ENCODE measurements at regions of chrX and their contacts with region 1.

Region 1: DNA sequence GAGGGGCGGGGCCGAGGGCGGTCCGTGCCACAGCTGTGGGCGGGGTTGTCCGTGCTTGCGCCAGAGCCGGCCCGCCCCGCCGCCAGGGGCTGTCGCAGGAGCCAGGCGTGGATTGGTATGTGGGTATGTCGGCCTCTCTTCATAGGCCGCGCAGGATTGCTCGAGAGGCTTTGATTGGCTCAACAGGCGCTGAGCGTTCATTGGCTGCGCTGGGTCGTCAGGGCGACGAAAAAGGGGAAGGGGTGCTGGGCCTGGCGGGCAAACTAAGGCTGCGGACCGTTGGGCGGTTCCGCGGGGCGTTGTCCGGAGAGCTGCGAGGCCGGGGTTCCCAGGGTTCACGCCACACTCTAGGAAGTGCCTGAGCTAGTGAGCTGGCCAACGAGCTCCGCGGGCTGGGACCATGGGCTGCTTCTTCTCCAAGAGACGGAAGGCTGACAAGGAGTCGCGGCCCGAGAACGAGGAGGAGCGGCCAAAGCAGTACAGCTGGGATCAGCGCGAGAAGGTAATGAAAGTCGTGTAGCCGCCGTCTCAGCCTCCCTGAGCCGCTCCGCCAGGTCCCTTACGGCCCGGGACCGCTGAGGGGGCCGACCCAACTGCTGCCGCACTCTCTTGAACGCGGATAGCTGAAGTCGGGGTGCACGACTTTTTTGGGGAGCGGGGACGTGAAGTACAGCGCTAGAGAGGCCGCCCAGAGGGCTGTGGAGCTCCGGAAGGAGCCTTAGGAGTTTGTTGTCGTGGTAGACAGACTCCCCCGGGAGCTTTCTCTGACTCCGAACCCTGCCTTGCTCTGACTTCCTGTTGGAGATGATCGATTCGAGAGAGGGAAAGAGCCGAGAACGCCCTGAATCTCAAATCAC is at the start of gene RP2:
- DNase-seq: peak; percentile 65 to 84 (median 81)
- ATAC-seq: peak; percentile 98
- H3K4me3 ChIP-seq: peak within 1 kb of the TSS; percentile 91
- H3K4me3 Mint-ChIP-seq: peak within 1 kb of the TSS; percentile 93 to 99 (median 97)
- H3K27ac ChIP-seq: peak within 1 kb of the TSS; percentile 83
- H3K27ac Mint-ChIP-seq: peak within 1 kb of the TSS; percentile 80 to 98 (median 93)
- H3K4me1 ChIP-seq: no peaks in the 10 kb centered on the region
- H3K4me1 Mint-ChIP-seq: peaks cover 0 to 29% (median 12%) of the 10 kb centered on the region in 7 donors
- H3K27me3 ChIP-seq: no peaks in the 10 kb centered on the region
- H3K27me3 Mint-ChIP-seq: peaks cover 0 to 3% (median 0%) of the 10 kb centered on the region in 5 donors
- total RNA-seq, gene RP2: 4.9 to 14.5 (median 6.3) TPM

Region 2: GRCh38 chrX:46704767-46705386 is 132.1 kb before region 1 on chrX:
- CTCF ChIA-PET with region 1: no interaction called
- POLR2A ChIA-PET with region 1: no interaction called
- intact Hi-C with region 1: no loop called
- DNase-seq: peak in 1 of 9 donors; percentile 42
- ATAC-seq: peak; percentile 32
- H3K4me3 ChIP-seq: no peak overlapping the region
- H3K4me3 Mint-ChIP-seq: peak overlapping the region in 1 of 10 donors; percentile 76
- H3K27ac ChIP-seq: no peak overlapping the region
- H3K27ac Mint-ChIP-seq: peak overlapping the region in 5 of 9 donors; percentile 9 to 92 (median 35)
- H3K4me1 ChIP-seq: no peaks in the 10 kb centered on the region
- H3K4me1 Mint-ChIP-seq: peaks cover 6 to 45% (median 7%) of the 10 kb centered on the region in 7 donors
- H3K27me3 ChIP-seq: no peaks in the 10 kb centered on the region
- H3K27me3 Mint-ChIP-seq: no peaks in the 10 kb centered on the region

Region 3: GRCh38 chrX:46912098-46912602 is 75.2 kb after region 1 on chrX and contains the start of gene JADE3:
- CTCF ChIA-PET with region 1: no interaction called
- POLR2A ChIA-PET with region 1: no interaction called
- intact Hi-C with region 1: loop called in 1 of 2 experiments (anchors 2 kb)
- DNase-seq: peak in 3 of 9 donors; percentile 3 to 45 (median 8)
- ATAC-seq: peak; percentile 75
- H3K4me3 ChIP-seq: peak within 1 kb of the TSS; percentile 39
- H3K4me3 Mint-ChIP-seq: peak within 1 kb of the TSS; percentile 67 to 90 (median 82)
- H3K27ac ChIP-seq: no peak within 1 kb of the TSS
- H3K27ac Mint-ChIP-seq: peak within 1 kb of the TSS in 1 of 9 donors; percentile 32
- H3K4me1 ChIP-seq: peaks cover 0 to 7% of the 10 kb centered on the region in 2 donors
- H3K4me1 Mint-ChIP-seq: peaks cover 0 to 14% (median 7%) of the 10 kb centered on the region in 7 donors
- H3K27me3 ChIP-seq: peaks cover 0 to 6% of the 10 kb centered on the region in 2 donors
- H3K27me3 Mint-ChIP-seq: peaks cover 15 to 66% (median 27%) of the 10 kb centered on the region in 5 donors
- total RNA-seq, gene JADE3: 0.11 to 1.3 (median 0.22) TPM

Region 4: DNA sequence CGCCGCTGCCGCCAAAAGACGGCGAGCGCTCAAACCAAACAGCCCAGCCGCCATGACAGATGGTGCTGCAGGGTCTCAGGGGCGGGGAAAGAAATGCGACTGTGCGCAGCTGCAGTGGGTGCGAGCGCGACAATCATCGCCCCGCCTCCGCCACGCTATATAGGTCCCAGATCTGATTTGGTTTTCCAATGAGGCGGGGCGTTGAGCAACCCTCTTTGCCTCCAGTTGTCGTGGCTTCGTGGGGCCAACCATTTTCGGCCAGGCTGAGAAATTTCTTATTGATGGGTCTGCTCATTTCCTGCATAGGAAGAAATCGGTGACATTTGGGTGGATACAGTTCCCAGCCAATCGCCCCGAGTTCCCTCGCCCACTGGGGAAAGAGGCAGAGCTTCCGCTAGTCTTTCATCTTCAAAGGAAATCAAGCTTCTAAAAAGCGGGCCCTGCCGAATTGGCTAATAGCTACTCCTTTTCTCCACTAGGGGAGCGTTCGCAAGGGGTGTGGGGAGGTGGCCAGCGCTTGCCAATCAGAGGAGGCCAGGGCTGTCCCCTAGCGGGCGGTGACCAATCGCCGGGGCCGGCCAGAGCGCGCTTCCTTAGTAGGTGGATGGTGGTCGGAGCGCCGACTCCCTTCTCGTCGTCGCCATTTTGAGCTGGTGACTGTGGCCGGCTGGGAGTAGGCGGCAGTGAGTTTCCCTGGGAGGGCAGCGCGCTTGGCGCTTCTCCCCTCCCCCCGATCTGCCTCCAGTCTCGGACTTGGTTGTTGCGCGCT is 307.9 kb after region 1 on chrX and contains the starts of genes NDUFB11 and RBM10:
- CTCF ChIA-PET with region 1: no interaction called
- POLR2A ChIA-PET with region 1: no interaction called
- intact Hi-C with region 1: loop called (anchors 2 kb)
- DNase-seq: peak; percentile 64 to 90 (median 87)
- ATAC-seq: peak; percentile 95
- H3K4me3 ChIP-seq: peak within 1 kb of the TSS; percentile 77
- H3K4me3 Mint-ChIP-seq: peak within 1 kb of the TSS; percentile 92 to 99 (median 96)
- H3K27ac ChIP-seq: peak within 1 kb of the TSS; percentile 94
- H3K27ac Mint-ChIP-seq: peak within 1 kb of the TSS; percentile 93 to 99 (median 96)
- H3K4me1 ChIP-seq: peaks cover 6 to 12% of the 10 kb centered on the region in 2 donors
- H3K4me1 Mint-ChIP-seq: peaks cover 6 to 42% (median 26%) of the 10 kb centered on the region in 7 donors
- H3K27me3 ChIP-seq: no peaks in the 10 kb centered on the region
- H3K27me3 Mint-ChIP-seq: no peaks in the 10 kb centered on the region
- total RNA-seq, gene NDUFB11: 51.3 to 92.5 (median 55.2) TPM
- total RNA-seq, gene RBM10: 31.8 to 55.6 (median 47.6) TPM

Measured in naive thymus-derived CD4-positive, alpha-beta T cell (primary cell).